Heart left ventricle (tissue), 16 donors: ENCODE measurements at regions of chr1 and their contacts with region 1.

Region 1: DNA sequence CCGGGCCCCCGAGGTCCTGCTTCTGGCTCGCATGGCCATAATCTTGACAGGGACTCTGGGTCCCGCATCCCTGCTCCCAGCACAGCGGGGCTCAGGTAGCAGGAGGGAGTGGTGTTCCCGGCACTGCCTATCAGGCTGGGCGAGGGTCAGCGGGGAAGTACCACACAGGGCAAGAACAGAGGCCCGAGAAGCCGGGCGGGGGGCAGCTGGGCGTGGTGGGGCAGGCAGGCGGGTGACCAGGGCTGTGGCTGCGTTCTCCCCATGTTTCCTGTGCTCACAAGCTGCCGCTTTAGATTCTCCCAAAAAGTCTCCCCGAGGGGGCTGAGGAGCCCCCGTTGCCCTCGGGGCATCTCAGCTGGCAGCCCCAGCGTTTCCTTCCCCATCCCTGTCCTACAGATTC is 18.3 kb downstream of the ATAD3B start:
- DNase-seq: no peak
- ATAC-seq: no peak
- H3K4me3 ChIP-seq: no peak overlapping the region
- H3K27ac ChIP-seq: no peak overlapping the region
- H3K4me1 ChIP-seq: no peaks in the 10 kb centered on the region
- H3K27me3 ChIP-seq: no peaks in the 10 kb centered on the region
- CTCF ChIP-seq: no peak
- POLR2A ChIP-seq: no peak

Region 2: GRCh38 chr1:975896-976683 is 513.8 kb before region 1 on chr1:
- intact Hi-C with region 1: loop called in 1 of 10 experiments (anchors 10 kb)
- DNase-seq: peak in 3 of 5 donors; percentile 44 to 79 (median 53)
- ATAC-seq: no peak
- H3K4me3 ChIP-seq: peak overlapping the region in 9 of 12 donors; percentile 12 to 40 (median 29)
- H3K27ac ChIP-seq: peak overlapping the region in 8 of 12 donors; percentile 29 to 76 (median 58)
- H3K4me1 ChIP-seq: peaks cover 0 to 46% (median 11%) of the 10 kb centered on the region in 12 donors
- H3K27me3 ChIP-seq: peaks cover 0 to 54% (median 28%) of the 10 kb centered on the region in 9 donors
- CTCF ChIP-seq: peak in 9 of 12 donors; percentile 4 to 59 (median 32)
- POLR2A ChIP-seq: no peak

Region 3: DNA sequence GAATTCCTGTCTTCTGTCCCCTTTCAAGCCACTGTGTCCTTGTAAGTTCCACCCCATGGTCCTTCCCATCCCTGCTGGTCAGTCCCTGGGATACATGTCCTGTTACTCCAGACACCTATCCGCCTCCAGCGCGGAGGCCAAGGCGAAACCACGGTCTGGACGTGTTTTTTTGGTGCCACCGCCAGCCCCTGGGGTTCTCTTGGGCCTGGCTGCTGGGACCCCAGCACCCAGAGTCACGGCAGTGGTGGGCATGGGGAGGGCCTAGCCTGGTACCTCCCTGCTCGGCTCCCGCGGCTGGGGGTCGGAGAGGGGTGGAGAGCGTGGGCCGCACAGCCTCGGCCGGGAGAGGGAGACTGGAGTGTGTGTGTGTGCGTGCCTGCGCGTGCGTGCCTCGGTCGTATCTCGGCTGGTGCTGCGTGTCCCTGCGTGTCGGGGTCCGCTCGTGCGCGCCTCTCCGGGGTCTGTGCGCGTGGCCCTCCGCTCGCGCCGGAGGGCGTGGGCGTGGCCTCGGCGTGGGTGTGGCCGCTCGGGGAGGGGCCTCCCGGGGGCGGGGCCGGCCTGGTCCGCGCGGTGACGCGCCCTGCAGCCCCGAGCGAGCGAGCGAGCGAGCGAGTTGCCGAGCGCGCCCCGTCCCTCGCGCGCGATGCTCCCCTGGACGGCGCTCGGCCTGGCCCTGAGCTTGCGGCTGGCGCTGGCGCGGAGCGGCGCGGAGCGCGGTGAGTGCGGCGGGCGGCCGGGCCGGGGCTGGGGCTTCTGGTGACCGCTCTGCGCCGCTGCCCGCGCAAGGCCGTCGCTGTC is 54.6 kb before region 1 on chr1 and contains the start of gene VWA1:
- intact Hi-C with region 1: no loop called
- DNase-seq: peak; percentile 77 to 83 (median 77)
- ATAC-seq: peak in 3 of 4 donors; percentile 27 to 60 (median 56)
- H3K4me3 ChIP-seq: peak within 1 kb of the TSS; percentile 28 to 69 (median 62)
- H3K27ac ChIP-seq: peak within 1 kb of the TSS; percentile 73 to 99 (median 91)
- H3K4me1 ChIP-seq: peaks cover 17 to 72% (median 61%) of the 10 kb centered on the region in 12 donors
- H3K27me3 ChIP-seq: peaks cover 0 to 35% (median 0%) of the 10 kb centered on the region in 9 donors
- CTCF ChIP-seq: no peak
- POLR2A ChIP-seq: peak in 1 of 2 donors; percentile 63
- total RNA-seq, gene VWA1: 11.0 to 49.5 (median 18.8) TPM

Region 4: GRCh38 chr1:1540090-1540817 is 50.4 kb after region 1 on chr1 and contains the start of gene TMEM240:
- intact Hi-C with region 1: no loop called
- DNase-seq: peak; percentile 86 to 90 (median 88)
- ATAC-seq: peak; percentile 18 to 67 (median 58)
- H3K4me3 ChIP-seq: peak within 1 kb of the TSS; percentile 34 to 93 (median 58)
- H3K27ac ChIP-seq: peak within 1 kb of the TSS; percentile 16 to 87 (median 77)
- H3K4me1 ChIP-seq: peaks cover 0 to 55% (median 21%) of the 10 kb centered on the region in 12 donors
- H3K27me3 ChIP-seq: no peaks in the 10 kb centered on the region
- CTCF ChIP-seq: no peak
- POLR2A ChIP-seq: no peak
- total RNA-seq, gene TMEM240: 2.6 to 5.6 (median 4.2) TPM in 8 of 9 donors, not detected in the other